Natural killer cell (primary cell): ENCODE measurements at regions of chr3 and their contacts with region 1.

Region 1: GRCh38 chr3:143121241-143122088 is 1.9 kb downstream of the CHST2 start:
- DNase-seq: peak; percentile 78 to 85
- ATAC-seq: peak; percentile 60 to 77 (median 68)
- H3K4me3 ChIP-seq: peak overlapping the region; percentile 80
- H3K4me3 Mint-ChIP-seq: peak overlapping the region; percentile 87
- H3K27ac ChIP-seq: peak overlapping the region; percentile 76
- H3K27ac Mint-ChIP-seq: peak overlapping the region; percentile 84 to 90
- H3K4me1 ChIP-seq: peaks cover 44% of the 10 kb centered on the region
- H3K4me1 Mint-ChIP-seq: peaks cover 56 to 64% of the 10 kb centered on the region in 2 donors
- H3K27me3 ChIP-seq: no peaks in the 10 kb centered on the region
- H3K27me3 Mint-ChIP-seq: no peaks in the 10 kb centered on the region
- CTCF ChIP-seq: peak; percentile 79

Region 2: GRCh38 chr3:141812084-141812483 is 1309.4 kb before region 1 on chr3:
- intact Hi-C with region 1: no loop called
- DNase-seq: no peak
- ATAC-seq: no peak
- H3K4me3 ChIP-seq: no peak overlapping the region
- H3K4me3 Mint-ChIP-seq: no peak overlapping the region
- H3K27ac ChIP-seq: no peak overlapping the region
- H3K27ac Mint-ChIP-seq: no peak overlapping the region
- H3K4me1 ChIP-seq: no peaks in the 10 kb centered on the region
- H3K4me1 Mint-ChIP-seq: no peaks in the 10 kb centered on the region
- H3K27me3 ChIP-seq: no peaks in the 10 kb centered on the region
- H3K27me3 Mint-ChIP-seq: peaks cover 9 to 14% of the 10 kb centered on the region in 2 donors
- CTCF ChIP-seq: no peak

Region 3: DNA sequence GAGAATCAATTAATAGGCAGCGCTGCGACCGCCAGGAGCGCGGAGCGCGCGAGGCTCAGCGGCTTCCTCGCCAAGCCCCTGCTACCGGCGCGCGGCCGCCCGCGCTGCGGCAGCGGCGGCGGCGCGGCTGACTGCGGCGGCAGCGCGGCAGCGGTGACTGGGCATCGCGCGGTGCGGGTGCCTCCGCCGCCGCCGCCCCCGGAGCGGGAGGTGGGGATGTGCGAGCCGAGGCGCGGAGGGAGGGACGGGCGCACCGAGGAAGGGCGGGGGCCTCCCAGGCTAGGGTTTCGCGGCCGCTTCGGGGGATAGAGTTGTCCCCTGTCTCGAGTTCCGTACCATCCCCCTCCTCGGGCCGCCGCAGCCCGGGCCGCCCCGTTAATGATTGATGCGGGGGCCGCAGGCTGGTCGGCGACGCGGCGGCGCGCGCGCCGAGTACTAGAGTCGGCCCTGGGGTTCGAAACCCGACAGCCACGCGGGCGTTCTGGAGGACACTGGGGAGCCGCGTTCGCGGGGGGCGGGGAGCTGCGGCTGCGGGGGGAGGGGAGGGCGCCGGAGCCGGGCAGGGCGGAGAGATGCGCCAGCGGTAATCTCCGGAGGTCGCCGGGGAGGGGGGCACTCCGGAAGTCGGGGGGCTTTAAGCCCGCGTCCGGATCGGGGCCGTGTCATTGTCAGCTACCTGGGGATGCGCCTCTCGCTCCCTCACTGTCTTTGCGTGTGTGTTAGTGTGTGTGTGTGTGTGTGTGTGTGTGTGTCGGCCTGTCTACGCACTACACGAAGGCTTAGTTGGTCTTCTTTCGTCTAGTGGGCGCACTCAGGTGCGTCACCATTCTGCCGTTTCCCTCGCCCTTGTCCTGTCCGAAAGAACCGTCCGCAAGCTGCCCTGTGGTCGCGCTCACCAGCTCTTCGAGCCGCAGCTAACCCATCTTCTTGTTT is 157.7 kb before region 1 on chr3 and contains the start of gene PAQR9:
- intact Hi-C with region 1: no loop called
- DNase-seq: peak in 1 of 2 donors; percentile 15
- ATAC-seq: peak; percentile 38 to 58 (median 42)
- H3K4me3 ChIP-seq: no peak within 1 kb of the TSS
- H3K4me3 Mint-ChIP-seq: peak within 1 kb of the TSS; percentile 85
- H3K27ac ChIP-seq: no peak within 1 kb of the TSS
- H3K27ac Mint-ChIP-seq: no peak within 1 kb of the TSS
- H3K4me1 ChIP-seq: peaks cover 8% of the 10 kb centered on the region
- H3K4me1 Mint-ChIP-seq: peaks cover 5 to 18% of the 10 kb centered on the region in 2 donors
- H3K27me3 ChIP-seq: peaks cover 21% of the 10 kb centered on the region
- H3K27me3 Mint-ChIP-seq: peaks cover 40 to 69% of the 10 kb centered on the region in 2 donors
- CTCF ChIP-seq: no peak
- total RNA-seq, gene PAQR9: not detected

Region 4: DNA sequence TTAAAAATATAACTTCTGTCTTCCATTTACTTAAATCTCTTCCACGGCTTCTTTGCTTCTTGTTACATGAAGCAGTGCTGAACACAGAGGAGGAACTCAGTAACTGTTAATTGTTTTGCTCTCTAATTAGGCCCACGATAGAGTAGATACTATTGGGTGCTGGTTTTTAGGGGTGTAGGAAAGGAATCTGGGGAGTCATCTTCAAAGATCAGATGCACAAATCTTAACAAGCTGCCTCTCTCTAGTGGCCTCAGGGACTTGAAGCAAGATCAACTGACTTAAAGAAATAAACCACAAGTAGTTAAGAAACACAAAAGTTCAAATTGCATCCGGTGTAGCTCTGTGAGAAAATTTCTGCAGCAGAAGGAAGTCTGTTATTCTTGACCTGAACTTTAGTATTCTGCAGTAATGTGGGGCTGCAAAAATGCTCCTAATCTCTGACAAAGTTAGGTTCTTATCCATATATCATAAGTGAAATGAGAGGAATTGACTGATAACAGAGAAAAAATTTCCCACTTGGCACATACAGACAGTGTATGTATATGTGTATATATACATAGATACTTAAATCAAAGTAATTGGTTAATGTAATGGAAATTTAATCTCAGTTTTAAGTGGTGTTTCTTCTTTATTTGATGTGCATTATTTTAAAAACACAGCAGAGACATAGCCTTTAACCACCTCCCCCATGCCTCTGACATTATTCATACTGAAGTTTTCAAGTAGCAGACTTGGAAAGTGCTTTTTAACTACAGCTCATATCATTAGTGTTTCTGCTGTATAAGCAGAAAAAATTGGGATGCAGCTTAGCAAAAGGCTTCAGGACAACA is 49.9 kb after region 1 on chr3:
- intact Hi-C with region 1: loop called (anchors 2 kb)
- DNase-seq: peak in 1 of 2 donors; percentile 55
- ATAC-seq: peak; percentile 50 to 78 (median 71)
- H3K4me3 ChIP-seq: no peak overlapping the region
- H3K4me3 Mint-ChIP-seq: peak overlapping the region; percentile 84
- H3K27ac ChIP-seq: peak overlapping the region; percentile 78
- H3K27ac Mint-ChIP-seq: peak overlapping the region; percentile 93 to 96
- H3K4me1 ChIP-seq: peaks cover 53% of the 10 kb centered on the region
- H3K4me1 Mint-ChIP-seq: peaks cover 88 to 91% of the 10 kb centered on the region in 2 donors
- H3K27me3 ChIP-seq: no peaks in the 10 kb centered on the region
- H3K27me3 Mint-ChIP-seq: no peaks in the 10 kb centered on the region
- CTCF ChIP-seq: no peak

Region 5: GRCh38 chr3:143207338-143207961 is 86.0 kb after region 1 on chr3:
- intact Hi-C with region 1: no loop called
- DNase-seq: no peak
- ATAC-seq: peak in 2 of 3 donors; percentile 24 to 26
- H3K4me3 ChIP-seq: no peak overlapping the region
- H3K4me3 Mint-ChIP-seq: no peak overlapping the region
- H3K27ac ChIP-seq: no peak overlapping the region
- H3K27ac Mint-ChIP-seq: peak overlapping the region; percentile 18 to 33
- H3K4me1 ChIP-seq: peaks cover 6% of the 10 kb centered on the region
- H3K4me1 Mint-ChIP-seq: peaks cover 24 to 26% of the 10 kb centered on the region in 2 donors
- H3K27me3 ChIP-seq: no peaks in the 10 kb centered on the region
- H3K27me3 Mint-ChIP-seq: no peaks in the 10 kb centered on the region
- CTCF ChIP-seq: no peak

Region 6: GRCh38 chr3:143276592-143276991 is 155.1 kb after region 1 on chr3:
- intact Hi-C with region 1: loop called (anchors 2 kb)
- DNase-seq: no peak
- ATAC-seq: no peak
- H3K4me3 ChIP-seq: no peak overlapping the region
- H3K4me3 Mint-ChIP-seq: peak overlapping the region; percentile 68
- H3K27ac ChIP-seq: no peak overlapping the region
- H3K27ac Mint-ChIP-seq: peak overlapping the region; percentile 17 to 62
- H3K4me1 ChIP-seq: peaks cover 49% of the 10 kb centered on the region
- H3K4me1 Mint-ChIP-seq: peaks cover 72 to 84% of the 10 kb centered on the region in 2 donors
- H3K27me3 ChIP-seq: no peaks in the 10 kb centered on the region
- H3K27me3 Mint-ChIP-seq: no peaks in the 10 kb centered on the region
- CTCF ChIP-seq: no peak

Region 7: GRCh38 chr3:143348486-143349327 is 227.2 kb after region 1 on chr3:
- intact Hi-C with region 1: loop called (anchors 5 kb)
- DNase-seq: peak in 1 of 2 donors; percentile 13
- ATAC-seq: peak in 2 of 3 donors; percentile 64 to 65
- H3K4me3 ChIP-seq: no peak overlapping the region
- H3K4me3 Mint-ChIP-seq: peak overlapping the region; percentile 38
- H3K27ac ChIP-seq: no peak overlapping the region
- H3K27ac Mint-ChIP-seq: peak overlapping the region; percentile 58 to 64
- H3K4me1 ChIP-seq: peaks cover 12% of the 10 kb centered on the region
- H3K4me1 Mint-ChIP-seq: peaks cover 31 to 53% of the 10 kb centered on the region in 2 donors
- H3K27me3 ChIP-seq: no peaks in the 10 kb centered on the region
- H3K27me3 Mint-ChIP-seq: no peaks in the 10 kb centered on the region
- CTCF ChIP-seq: no peak

Region 8: GRCh38 chr3:143644370-143645089 is 523.1 kb after region 1 on chr3:
- intact Hi-C with region 1: loop called (anchors 1 kb)
- DNase-seq: peak in 1 of 2 donors; percentile 40
- ATAC-seq: peak in 2 of 3 donors; percentile 51 to 61
- H3K4me3 ChIP-seq: no peak overlapping the region
- H3K4me3 Mint-ChIP-seq: no peak overlapping the region
- H3K27ac ChIP-seq: no peak overlapping the region
- H3K27ac Mint-ChIP-seq: no peak overlapping the region
- H3K4me1 ChIP-seq: no peaks in the 10 kb centered on the region
- H3K4me1 Mint-ChIP-seq: no peaks in the 10 kb centered on the region
- H3K27me3 ChIP-seq: no peaks in the 10 kb centered on the region
- H3K27me3 Mint-ChIP-seq: no peaks in the 10 kb centered on the region
- CTCF ChIP-seq: peak; percentile 40

Region 9: GRCh38 chr3:143972505-143973255 is 851.2 kb after region 1 on chr3:
- intact Hi-C with region 1: loop called (anchors 5 kb)
- DNase-seq: peak; percentile 59 to 91
- ATAC-seq: peak; percentile 10 to 47 (median 27)
- H3K4me3 ChIP-seq: peak overlapping the region; percentile 65
- H3K4me3 Mint-ChIP-seq: peak overlapping the region; percentile 89
- H3K27ac ChIP-seq: peak overlapping the region; percentile 90
- H3K27ac Mint-ChIP-seq: peak overlapping the region; percentile 82 to 94
- H3K4me1 ChIP-seq: peaks cover 9% of the 10 kb centered on the region
- H3K4me1 Mint-ChIP-seq: peaks cover 34 to 45% of the 10 kb centered on the region in 2 donors
- H3K27me3 ChIP-seq: no peaks in the 10 kb centered on the region
- H3K27me3 Mint-ChIP-seq: no peaks in the 10 kb centered on the region
- CTCF ChIP-seq: peak; percentile 32